Heart right ventricle (tissue), 16 donors: ENCODE measurements at regions of chr1 and their contacts with region 1.

Region 1: GRCh38 chr1:49424782-49425181 is 599.0 kb downstream of the AGBL4 start:
- DNase-seq: no peak
- ATAC-seq: no peak
- H3K4me3 ChIP-seq: no peak overlapping the region
- H3K27ac ChIP-seq: no peak overlapping the region
- H3K4me1 ChIP-seq: no peaks in the 10 kb centered on the region
- H3K27me3 ChIP-seq: no peaks in the 10 kb centered on the region
- CTCF ChIP-seq: no peak

Region 2: DNA sequence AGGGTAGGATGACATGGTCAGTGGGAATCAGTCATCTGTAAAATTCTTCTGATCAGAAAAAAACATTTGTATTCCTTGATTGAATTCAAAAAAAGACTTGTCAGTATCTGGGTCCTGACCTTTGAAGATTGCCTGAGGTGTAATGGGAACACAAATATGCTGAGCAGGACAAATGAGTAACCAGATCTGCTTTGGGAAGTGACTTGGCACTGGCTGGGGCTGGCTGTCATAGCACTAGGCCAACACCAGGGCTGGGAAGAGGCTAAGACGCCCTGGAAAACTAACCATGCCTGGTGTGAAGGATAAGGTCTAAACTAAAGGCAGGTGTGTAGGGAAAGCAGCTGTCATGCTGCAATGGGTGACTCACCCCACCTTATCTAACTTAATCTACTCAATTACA is 195.2 kb before region 1 on chr1:
- intact Hi-C with region 1: no loop called
- DNase-seq: no peak
- ATAC-seq: no peak
- H3K4me3 ChIP-seq: no peak overlapping the region
- H3K27ac ChIP-seq: no peak overlapping the region
- H3K4me1 ChIP-seq: no peaks in the 10 kb centered on the region
- H3K27me3 ChIP-seq: peaks cover 0 to 5% (median 0%) of the 10 kb centered on the region in 7 donors
- CTCF ChIP-seq: no peak

Region 3: GRCh38 chr1:49408346-49408745 is 16.4 kb before region 1 on chr1:
- intact Hi-C with region 1: loop called in 1 of 10 experiments (anchors 1 kb)
- DNase-seq: no peak
- ATAC-seq: no peak
- H3K4me3 ChIP-seq: no peak overlapping the region
- H3K27ac ChIP-seq: no peak overlapping the region
- H3K4me1 ChIP-seq: no peaks in the 10 kb centered on the region
- H3K27me3 ChIP-seq: no peaks in the 10 kb centered on the region
- CTCF ChIP-seq: no peak